Aorta (tissue), 5 donors: ENCODE measurements at regions of chr7 and their contacts with region 1.

Region 1: GRCh38 chr7:85041605-85042216 is 145.1 kb downstream of the SEMA3D start:
- DNase-seq: peak; percentile 68 to 84
- ATAC-seq: peak; percentile 74
- H3K4me3 ChIP-seq: no peak overlapping the region
- H3K27ac ChIP-seq: no peak overlapping the region
- H3K4me1 ChIP-seq: no peaks in the 10 kb centered on the region
- H3K27me3 ChIP-seq: no peaks in the 10 kb centered on the region

Region 2: GRCh38 chr7:85094046-85094725 is 52.5 kb after region 1 on chr7:
- intact Hi-C with region 1: no loop called
- DNase-seq: peak in 1 of 2 donors; percentile 46
- ATAC-seq: peak; percentile 90
- H3K4me3 ChIP-seq: no peak overlapping the region
- H3K27ac ChIP-seq: peak overlapping the region in 1 of 2 donors; percentile 81
- H3K4me1 ChIP-seq: peaks cover 0 to 3% of the 10 kb centered on the region in 2 donors
- H3K27me3 ChIP-seq: no peaks in the 10 kb centered on the region

Region 3: DNA sequence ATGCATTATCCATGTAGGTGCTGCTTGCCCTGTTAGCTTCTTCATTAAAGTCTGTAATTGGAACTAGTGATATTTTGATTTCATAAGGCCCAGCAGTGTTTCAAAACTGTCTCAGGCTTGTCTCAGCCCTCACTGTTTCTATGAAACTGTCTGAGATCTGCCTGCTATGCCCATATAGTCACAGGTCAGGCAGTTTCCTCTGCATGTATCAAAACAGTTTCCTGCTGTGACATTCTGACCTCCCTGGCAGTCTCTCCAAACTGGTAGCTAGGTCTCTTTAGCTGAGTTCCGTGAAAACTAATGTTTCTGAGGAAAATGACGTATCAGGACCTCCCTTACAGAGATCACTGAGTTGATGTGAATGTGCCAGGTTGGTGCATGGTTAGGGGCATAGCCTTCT is 164.0 kb after region 1 on chr7:
- intact Hi-C with region 1: no loop called
- DNase-seq: no peak
- ATAC-seq: peak; percentile 29
- H3K4me3 ChIP-seq: no peak overlapping the region
- H3K27ac ChIP-seq: no peak overlapping the region
- H3K4me1 ChIP-seq: no peaks in the 10 kb centered on the region
- H3K27me3 ChIP-seq: no peaks in the 10 kb centered on the region

Region 4: GRCh38 chr7:85464042-85464651 is 422.4 kb after region 1 on chr7:
- intact Hi-C with region 1: loop called (anchors 10 kb)
- DNase-seq: no peak
- ATAC-seq: no peak
- H3K4me3 ChIP-seq: no peak overlapping the region
- H3K27ac ChIP-seq: no peak overlapping the region
- H3K4me1 ChIP-seq: no peaks in the 10 kb centered on the region
- H3K27me3 ChIP-seq: no peaks in the 10 kb centered on the region

Region 5: GRCh38 chr7:85554236-85555178 is 512.8 kb after region 1 on chr7:
- intact Hi-C with region 1: loop called in 1 of 2 experiments (anchors 5 kb)
- DNase-seq: no peak
- ATAC-seq: peak; percentile 86
- H3K4me3 ChIP-seq: no peak overlapping the region
- H3K27ac ChIP-seq: no peak overlapping the region
- H3K4me1 ChIP-seq: no peaks in the 10 kb centered on the region
- H3K27me3 ChIP-seq: no peaks in the 10 kb centered on the region

Region 6: DNA sequence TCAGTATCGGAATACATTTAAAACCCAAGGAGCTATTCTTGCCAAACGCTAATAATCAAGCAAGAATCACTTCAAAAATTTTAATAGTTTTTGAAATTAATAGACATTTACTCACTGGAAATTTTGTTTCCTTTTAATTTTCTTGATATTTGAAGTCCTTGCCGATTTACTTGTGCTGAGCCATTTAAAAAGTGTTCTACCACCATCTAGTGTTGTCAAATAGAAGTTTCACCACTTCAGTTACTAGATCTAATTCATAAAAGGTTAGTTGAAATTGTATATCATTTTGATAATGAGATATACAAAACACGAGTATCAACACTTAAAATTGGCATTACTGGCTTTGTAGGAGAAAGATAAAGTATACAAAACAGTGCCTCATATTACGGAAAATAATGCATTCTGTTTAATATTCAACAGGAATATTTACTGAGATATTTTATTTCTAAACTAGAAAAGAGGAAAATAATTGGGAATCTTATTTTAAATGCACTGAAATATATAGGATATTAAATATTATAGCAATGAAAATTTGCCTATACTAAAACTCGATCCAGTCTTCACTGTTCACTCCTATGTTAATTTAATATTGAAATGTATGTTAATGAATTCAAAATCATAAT is 810.0 kb after region 1 on chr7:
- intact Hi-C with region 1: loop called in 1 of 2 experiments (anchors 10 kb)
- DNase-seq: no peak
- ATAC-seq: no peak
- H3K4me3 ChIP-seq: no peak overlapping the region
- H3K27ac ChIP-seq: no peak overlapping the region
- H3K4me1 ChIP-seq: no peaks in the 10 kb centered on the region
- H3K27me3 ChIP-seq: no peaks in the 10 kb centered on the region